Caki2 (cell line): ENCODE measurements at regions of chr7 and their contacts with region 1.

Region 1: GRCh38 chr7:25846722-25847121 is 305.3 kb upstream of the NFE2L3 start:
- DNase-seq: peak; percentile 83

Region 2: DNA sequence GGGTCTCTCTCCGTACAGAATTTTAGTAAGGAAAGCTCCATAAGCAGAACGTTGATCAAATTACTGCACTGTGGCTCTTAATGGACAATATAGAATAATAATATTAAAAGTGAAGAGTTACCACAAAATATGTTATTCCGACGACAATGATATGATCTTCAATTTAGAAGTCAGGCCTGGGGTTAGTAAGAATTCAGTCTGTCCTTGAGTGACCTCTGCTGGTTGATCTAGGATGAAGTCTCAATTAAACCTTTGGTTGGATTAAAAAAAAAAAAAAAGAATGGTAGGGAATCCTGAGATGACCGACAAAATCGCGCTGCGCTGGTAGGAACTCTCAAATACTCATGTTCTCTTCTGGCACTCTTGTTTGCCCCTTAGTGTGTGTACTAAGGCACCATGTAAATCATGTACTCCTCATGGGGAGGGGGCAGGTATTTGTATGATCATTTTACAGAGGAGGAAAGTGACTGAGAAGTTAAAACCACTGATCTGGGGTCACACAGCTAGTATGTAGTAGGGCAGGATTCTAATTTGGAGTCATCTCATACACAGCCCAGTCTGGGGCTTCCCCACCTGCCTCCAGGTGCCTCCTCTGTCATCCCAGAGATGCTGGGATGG is 457.1 kb before region 1 on chr7:
- in situ Hi-C with region 1: loop called (anchors 25 kb)
- DNase-seq: peak; percentile 43